HCT116 (cell line): ENCODE measurements at regions of chr4 and their contacts with region 1.

Region 1: GRCh38 chr4:6343950-6344408 is 74.3 kb downstream of the WFS1 start:
- DNase-seq: peak; percentile 79
- ATAC-seq: peak; percentile 98
- H3K4me3 ChIP-seq: peak overlapping the region; percentile 8 to 35; a peak in 3 of 4 replicates
- H3K27ac ChIP-seq: peak overlapping the region; percentile 61
- H3K4me1 ChIP-seq: peaks cover 16 to 24% of the 10 kb centered on the region in 2 experiments
- H3K27me3 ChIP-seq: no peaks in the 10 kb centered on the region
- CTCF ChIP-seq: peak; percentile 36 to 67 (median 47); a peak in 5 of 6 replicates
- POLR2A ChIP-seq: no peak
- RAD21 ChIP-seq: peak; percentile 79

Region 2: GRCh38 chr4:6333301-6334202 is 10.4 kb before region 1 on chr4:
- CTCF ChIA-PET with region 1: interaction called, 20 read pairs
- POLR2A ChIA-PET with region 1: no interaction called
- RAD21 ChIA-PET with region 1: no interaction called
- intact Hi-C with region 1: no loop called
- DNase-seq: no peak
- ATAC-seq: no peak; the same call in 1 of the 2 replicates
- H3K4me3 ChIP-seq: no peak overlapping the region
- H3K27ac ChIP-seq: no peak overlapping the region
- H3K4me1 ChIP-seq: peaks cover 11 to 16% of the 10 kb centered on the region in 2 experiments
- H3K27me3 ChIP-seq: 0 out of 2 replicates have a peak, but pooled peaks cover 3% of the 10 kb centered on the region
- CTCF ChIP-seq: peak; percentile 23 to 83 (median 78); a peak in 5 of 6 replicates
- POLR2A ChIP-seq: no peak
- RAD21 ChIP-seq: peak; percentile 26; the same call in 1 of the 2 replicates